Caco-2 (cell line): ENCODE measurements at regions of chrX and their contacts with region 1.

Region 1: GRCh38 chrX:16662370-16662769 is 12.4 kb downstream of the S100G start:
- DNase-seq: peak in 1 of 2 experiments; percentile 17
- H3K4me3 ChIP-seq: no peak overlapping the region
- H3K4me3 Mint-ChIP-seq: no peak overlapping the region
- H3K27ac Mint-ChIP-seq: no peak overlapping the region
- H3K4me1 ChIP-seq: no peaks in the 10 kb centered on the region; the same call in 1 of the 2 replicates
- H3K4me1 Mint-ChIP-seq: peaks cover 19% of the 10 kb centered on the region
- H3K27me3 ChIP-seq: no peaks in the 10 kb centered on the region
- H3K27me3 Mint-ChIP-seq: no peaks in the 10 kb centered on the region
- CTCF ChIP-seq: no peak

Region 2: DNA sequence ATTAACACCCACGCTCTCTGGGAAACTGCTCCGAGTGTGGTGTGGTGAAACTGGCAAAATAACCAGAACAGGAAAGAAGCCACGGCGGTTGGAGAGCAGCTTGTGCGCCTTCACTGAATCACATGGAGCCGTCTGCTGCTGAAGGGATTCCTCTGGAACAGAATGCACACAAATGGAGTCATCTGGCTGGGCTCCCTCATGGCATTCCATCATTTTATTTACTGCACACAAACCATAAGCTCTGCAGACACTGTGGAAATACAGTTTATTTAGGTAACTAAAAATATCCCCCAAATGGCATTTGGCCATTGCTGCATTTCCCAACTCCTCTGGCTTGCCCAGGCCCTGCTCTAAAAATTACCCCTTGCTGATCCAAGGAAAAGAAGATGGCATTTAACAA is 199.5 kb before region 1 on chrX:
- CTCF ChIA-PET with region 1: no interaction called
- POLR2A ChIA-PET with region 1: no interaction called
- intact Hi-C with region 1: no loop called
- DNase-seq: no peak
- H3K4me3 ChIP-seq: no peak overlapping the region
- H3K4me3 Mint-ChIP-seq: no peak overlapping the region
- H3K27ac Mint-ChIP-seq: no peak overlapping the region
- H3K4me1 ChIP-seq: no peaks in the 10 kb centered on the region
- H3K4me1 Mint-ChIP-seq: no peaks in the 10 kb centered on the region
- H3K27me3 ChIP-seq: no peaks in the 10 kb centered on the region
- H3K27me3 Mint-ChIP-seq: no peaks in the 10 kb centered on the region
- CTCF ChIP-seq: no peak

Region 3: GRCh38 chrX:16603822-16604221 is 58.5 kb before region 1 on chrX:
- CTCF ChIA-PET with region 1: no interaction called
- POLR2A ChIA-PET with region 1: no interaction called
- intact Hi-C with region 1: loop called (anchors 2 kb)
- DNase-seq: no peak
- H3K4me3 ChIP-seq: no peak overlapping the region
- H3K4me3 Mint-ChIP-seq: peak overlapping the region; percentile 29
- H3K27ac Mint-ChIP-seq: peak overlapping the region; percentile 91
- H3K4me1 ChIP-seq: peaks cover 24% of the 10 kb centered on the region
- H3K4me1 Mint-ChIP-seq: peaks cover 10% of the 10 kb centered on the region
- H3K27me3 ChIP-seq: no peaks in the 10 kb centered on the region
- H3K27me3 Mint-ChIP-seq: no peaks in the 10 kb centered on the region
- CTCF ChIP-seq: no peak

Region 4: DNA sequence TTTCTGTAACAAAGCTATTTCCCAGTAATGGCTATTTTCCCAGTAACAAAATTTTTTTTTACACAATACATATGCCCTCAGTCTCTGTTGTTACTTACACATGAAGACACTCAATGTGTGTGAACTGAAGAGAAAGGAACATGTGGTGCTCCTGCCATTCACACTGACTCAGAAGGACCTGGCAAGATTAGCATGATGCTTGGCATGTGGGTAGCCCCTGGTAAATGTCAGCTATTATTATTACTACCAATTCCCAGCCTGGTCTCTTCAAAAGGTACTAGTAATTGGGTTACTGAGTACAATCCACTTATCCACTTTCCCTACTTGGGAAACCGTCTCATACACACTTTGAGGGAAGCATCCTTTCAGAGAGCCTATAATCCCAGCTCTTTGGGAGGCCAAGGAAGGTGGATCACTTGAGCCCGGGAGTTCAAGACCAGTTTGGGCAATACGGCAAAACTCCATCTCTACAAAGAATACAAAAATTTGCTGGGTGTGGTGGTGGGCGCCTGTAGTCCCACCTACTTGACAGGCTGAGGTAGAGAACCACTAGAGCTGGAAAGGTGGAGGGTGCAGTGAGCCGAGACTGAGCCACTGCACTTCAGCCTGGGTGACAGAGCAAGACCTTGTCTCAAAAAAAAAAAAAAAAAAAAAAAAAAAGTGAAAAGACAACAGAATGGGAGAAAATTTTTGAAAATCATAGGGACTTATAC is 193.1 kb after region 1 on chrX:
- CTCF ChIA-PET with region 1: no interaction called
- POLR2A ChIA-PET with region 1: no interaction called
- intact Hi-C with region 1: no loop called
- DNase-seq: no peak
- H3K4me3 ChIP-seq: no peak overlapping the region
- H3K4me3 Mint-ChIP-seq: no peak overlapping the region
- H3K27ac Mint-ChIP-seq: no peak overlapping the region
- H3K4me1 ChIP-seq: no peaks in the 10 kb centered on the region
- H3K4me1 Mint-ChIP-seq: no peaks in the 10 kb centered on the region
- H3K27me3 ChIP-seq: no peaks in the 10 kb centered on the region
- H3K27me3 Mint-ChIP-seq: no peaks in the 10 kb centered on the region
- CTCF ChIP-seq: no peak